Left colon (tissue), 2 donors: ENCODE measurements at regions of chr22 and their contacts with region 1.

Region 1: GRCh38 chr22:36977947-36978660 is 41.1 kb downstream of the TST start:
- DNase-seq: peak; percentile 90 to 93
- ATAC-seq: peak; percentile 96

Region 2: GRCh38 chr22:36781656-36782627 is 196.2 kb before region 1 on chr22:
- intact Hi-C with region 1: loop called in 1 of 2 experiments (anchors 5 kb)
- DNase-seq: peak; percentile 76 to 82
- ATAC-seq: peak; percentile 97

Region 3: DNA sequence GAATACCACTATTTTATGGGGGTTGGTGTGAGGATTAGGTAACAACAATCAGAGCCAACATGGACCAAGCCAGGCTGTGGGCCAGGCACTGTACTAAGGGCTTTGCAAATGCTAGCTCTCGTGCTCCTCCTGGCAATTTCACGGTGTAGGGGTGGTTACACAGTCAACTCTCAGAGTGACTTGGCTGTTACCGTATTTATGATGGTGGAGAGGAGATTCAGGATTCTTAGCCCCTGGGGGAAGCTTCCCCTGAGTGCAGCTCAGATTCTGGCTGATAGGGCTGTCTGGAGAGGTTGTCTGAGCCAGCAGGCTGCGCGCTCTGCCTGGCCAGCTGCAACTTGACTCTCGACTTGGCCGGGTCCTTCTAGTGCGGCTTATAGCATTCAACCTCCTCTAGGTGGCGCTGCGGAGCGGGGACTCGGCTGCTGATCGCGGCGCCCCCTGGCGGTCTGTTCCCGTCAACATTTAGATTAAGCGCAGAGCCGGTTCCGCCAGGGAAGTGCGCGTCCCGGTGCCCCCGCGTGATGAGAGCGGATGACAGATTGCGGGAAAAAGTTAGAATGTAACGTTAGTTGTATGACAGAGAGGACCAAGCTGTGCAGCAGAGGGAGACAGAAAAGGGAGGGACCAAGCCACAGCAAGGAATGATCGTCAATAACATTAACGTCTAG is 121.8 kb before region 1 on chr22:
- intact Hi-C with region 1: loop called in 1 of 2 experiments (anchors 5 kb)
- DNase-seq: peak; percentile 78 to 95
- ATAC-seq: peak; percentile 86